Endothelial cell of umbilical vein (primary cell): ENCODE measurements at regions of chr16 and their contacts with region 1.

Region 1: GRCh38 chr16:9090960-9091866 is at the start of gene HAPSTR1:
- DNase-seq: peak; percentile 100
- H3K4me3 ChIP-seq: peak within 1 kb of the TSS; percentile 73 to 89 (median 80)
- H3K27ac ChIP-seq: peak within 1 kb of the TSS; percentile 78
- H3K4me1 ChIP-seq: peaks cover 32% of the 10 kb centered on the region
- H3K27me3 ChIP-seq: no peaks in the 10 kb centered on the region
- CTCF ChIP-seq: no peak
- POLR2A ChIP-seq: peak; percentile 96
- total RNA-seq, gene HAPSTR1: 60.1 and 63.7 TPM in 2 replicates

Region 2: GRCh38 chr16:8905168-8905762 is 185.9 kb before region 1 on chr16:
- CTCF ChIA-PET with region 1: no interaction called
- POLR2A ChIA-PET with region 1: no interaction called
- dilution Hi-C with region 1: no loop called
- intact Hi-C with region 1: loop called (anchors 5 kb)
- DNase-seq: peak; percentile 42
- H3K4me3 ChIP-seq: no peak overlapping the region
- H3K27ac ChIP-seq: no peak overlapping the region
- H3K4me1 ChIP-seq: no peaks in the 10 kb centered on the region
- H3K27me3 ChIP-seq: no peaks in the 10 kb centered on the region
- CTCF ChIP-seq: peak; percentile 27 to 50
- POLR2A ChIP-seq: no peak

Region 3: DNA sequence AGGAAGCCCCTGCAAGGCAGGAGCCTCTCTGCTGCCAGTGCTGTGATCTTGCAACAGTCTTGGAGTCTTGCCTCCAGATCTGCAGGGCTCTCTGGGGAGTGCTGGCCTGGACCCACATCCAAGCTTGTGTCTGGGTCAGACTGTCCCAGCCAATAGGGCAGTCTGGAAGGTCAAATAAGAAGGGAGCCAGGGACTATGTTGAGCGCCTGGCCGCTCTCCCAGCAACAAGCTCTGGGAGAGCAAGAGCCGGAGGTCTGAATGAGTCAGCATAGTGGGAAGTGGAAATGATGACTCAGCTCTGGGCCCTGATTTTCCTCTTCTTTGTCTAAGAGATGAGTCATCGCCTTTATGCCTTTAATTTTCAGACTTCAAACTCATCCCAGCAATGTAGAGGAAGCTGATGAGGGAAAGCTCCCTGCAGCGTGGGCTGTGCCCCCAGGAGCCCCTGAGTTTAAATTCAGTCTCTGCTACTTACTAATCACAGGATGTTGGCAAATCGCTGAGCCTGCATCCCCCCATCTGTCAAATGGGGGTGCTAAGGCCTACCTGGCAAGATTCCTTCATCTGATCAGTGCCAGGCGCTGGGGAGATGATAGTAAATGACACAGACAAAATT is 43.4 kb before region 1 on chr16:
- CTCF ChIA-PET with region 1: interaction called, 8 read pairs
- POLR2A ChIA-PET with region 1: interaction called, 12 read pairs
- dilution Hi-C with region 1: no loop called
- intact Hi-C with region 1: loop called (anchors 1 kb)
- DNase-seq: peak; percentile 98
- H3K4me3 ChIP-seq: no peak overlapping the region
- H3K27ac ChIP-seq: peak overlapping the region; percentile 94
- H3K4me1 ChIP-seq: peaks cover 15% of the 10 kb centered on the region
- H3K27me3 ChIP-seq: no peaks in the 10 kb centered on the region
- CTCF ChIP-seq: no peak
- POLR2A ChIP-seq: no peak

Region 4: GRCh38 chr16:9107025-9107970 is 16.1 kb after region 1 on chr16:
- CTCF ChIA-PET with region 1: interaction called, 5 read pairs
- POLR2A ChIA-PET with region 1: interaction called, 9 read pairs
- dilution Hi-C with region 1: no loop called
- intact Hi-C with region 1: loop called (anchors 2 kb)
- DNase-seq: no peak
- H3K4me3 ChIP-seq: no peak overlapping the region
- H3K27ac ChIP-seq: no peak overlapping the region
- H3K4me1 ChIP-seq: peaks cover 39% of the 10 kb centered on the region
- H3K27me3 ChIP-seq: no peaks in the 10 kb centered on the region
- CTCF ChIP-seq: no peak
- POLR2A ChIP-seq: no peak